Activated CD8-positive, alpha-beta T cell treated with anti-CD3 and anti-CD28 coated beads for 36 hours (primary cell): ENCODE measurements at regions of chr17 and their contacts with region 1.

Region 1: GRCh38 chr17:44218344-44219107 is 949 bp downstream of the UBTF start:
- DNase-seq: peak; percentile 86
- ATAC-seq: peak; percentile 63
- H3K4me3 Mint-ChIP-seq: peak overlapping the region; percentile 96
- H3K27ac Mint-ChIP-seq: peak overlapping the region; percentile 98
- H3K4me1 Mint-ChIP-seq: peaks cover 37% of the 10 kb centered on the region
- H3K27me3 Mint-ChIP-seq: no peaks in the 10 kb centered on the region
- CTCF ChIP-seq: peak; percentile 75

Region 2: GRCh38 chr17:44186307-44187130 is 32.0 kb before region 1 on chr17 and contains the start of gene TMUB2:
- CTCF ChIA-PET with region 1: interaction called, 3 read pairs
- POLR2A ChIA-PET with region 1: interaction called, 13 read pairs
- intact Hi-C with region 1: no loop called
- DNase-seq: peak; percentile 100
- ATAC-seq: peak; percentile 98
- H3K4me3 Mint-ChIP-seq: peak within 1 kb of the TSS; percentile 100
- H3K27ac Mint-ChIP-seq: peak within 1 kb of the TSS; percentile 99
- H3K4me1 Mint-ChIP-seq: peaks cover 33% of the 10 kb centered on the region
- H3K27me3 Mint-ChIP-seq: no peaks in the 10 kb centered on the region
- CTCF ChIP-seq: no peak
- total RNA-seq, gene TMUB2: 17.5 TPM

Region 3: GRCh38 chr17:44199553-44200477 is 18.7 kb before region 1 on chr17 and contains the start of gene ATXN7L3:
- CTCF ChIA-PET with region 1: interaction called, 51 read pairs
- POLR2A ChIA-PET with region 1: interaction called, 58 read pairs
- intact Hi-C with region 1: no loop called
- DNase-seq: peak; percentile 100
- ATAC-seq: peak; percentile 85
- H3K4me3 Mint-ChIP-seq: peak within 1 kb of the TSS; percentile 89
- H3K27ac Mint-ChIP-seq: peak within 1 kb of the TSS; percentile 97
- H3K4me1 Mint-ChIP-seq: peaks cover 38% of the 10 kb centered on the region
- H3K27me3 Mint-ChIP-seq: no peaks in the 10 kb centered on the region
- CTCF ChIP-seq: no peak
- total RNA-seq, gene ATXN7L3: 58.1 to 62.3 TPM

Region 4: GRCh38 chr17:44247440-44247841 is 28.9 kb after region 1 on chr17:
- CTCF ChIA-PET with region 1: interaction called, 5 read pairs
- POLR2A ChIA-PET with region 1: interaction called, 20 read pairs
- intact Hi-C with region 1: no loop called
- DNase-seq: no peak
- ATAC-seq: no peak
- H3K4me3 Mint-ChIP-seq: no peak overlapping the region
- H3K27ac Mint-ChIP-seq: peak overlapping the region; percentile 89
- H3K4me1 Mint-ChIP-seq: peaks cover 48% of the 10 kb centered on the region
- H3K27me3 Mint-ChIP-seq: no peaks in the 10 kb centered on the region
- CTCF ChIP-seq: no peak

Region 5: GRCh38 chr17:44266402-44267164 is 48.1 kb after region 1 on chr17:
- CTCF ChIA-PET with region 1: no interaction called
- POLR2A ChIA-PET with region 1: no interaction called
- intact Hi-C with region 1: no loop called
- DNase-seq: no peak
- ATAC-seq: no peak
- H3K4me3 Mint-ChIP-seq: no peak overlapping the region
- H3K27ac Mint-ChIP-seq: no peak overlapping the region
- H3K4me1 Mint-ChIP-seq: no peaks in the 10 kb centered on the region
- H3K27me3 Mint-ChIP-seq: no peaks in the 10 kb centered on the region
- CTCF ChIP-seq: no peak

Region 6: DNA sequence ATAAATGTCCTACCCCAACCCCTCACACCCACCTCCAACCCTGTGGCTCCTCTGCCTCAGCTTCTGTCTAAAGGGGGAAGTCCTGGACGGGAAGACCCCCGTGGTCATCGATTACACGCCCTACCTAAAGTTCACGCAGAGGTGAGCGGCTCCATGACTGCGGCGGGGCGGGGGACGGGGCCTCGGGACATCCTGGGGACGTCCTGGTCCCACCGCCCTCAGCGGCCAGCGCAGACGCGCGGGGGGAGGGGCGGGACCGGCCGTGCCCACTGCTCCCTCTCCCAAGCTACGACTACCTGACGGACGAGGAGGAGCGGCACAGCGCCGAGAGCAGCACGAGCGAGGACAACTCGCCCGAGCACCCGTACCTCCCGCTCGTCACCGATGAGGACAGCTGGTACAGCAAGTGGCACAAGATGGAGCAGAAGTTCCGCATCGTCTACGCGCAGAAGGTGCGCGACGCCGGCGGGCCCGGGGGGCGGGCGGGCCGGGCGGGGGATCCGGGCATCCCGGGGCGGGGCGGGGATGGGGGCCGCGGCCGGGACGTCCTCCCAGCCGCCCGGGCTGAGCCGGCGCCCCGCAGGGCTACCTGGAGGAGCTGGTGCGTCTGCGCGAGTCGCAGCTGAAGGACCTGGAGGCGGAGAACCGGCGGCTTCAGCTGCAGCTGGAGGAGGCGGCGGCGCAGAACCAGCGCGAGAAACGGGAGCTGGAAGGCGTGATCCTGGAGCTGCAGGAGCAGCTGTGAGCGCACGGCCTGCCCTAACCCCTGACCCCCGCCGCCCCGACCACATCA is 96.5 kb after region 1 on chr17:
- CTCF ChIA-PET with region 1: interaction called, 3 read pairs
- POLR2A ChIA-PET with region 1: interaction called, 19 read pairs
- intact Hi-C with region 1: no loop called
- DNase-seq: peak; percentile 70
- ATAC-seq: peak; percentile 75
- H3K4me3 Mint-ChIP-seq: peak overlapping the region; percentile 70
- H3K27ac Mint-ChIP-seq: no peak overlapping the region
- H3K4me1 Mint-ChIP-seq: peaks cover 12% of the 10 kb centered on the region
- H3K27me3 Mint-ChIP-seq: peaks cover 30% of the 10 kb centered on the region
- CTCF ChIP-seq: no peak

Region 7: DNA sequence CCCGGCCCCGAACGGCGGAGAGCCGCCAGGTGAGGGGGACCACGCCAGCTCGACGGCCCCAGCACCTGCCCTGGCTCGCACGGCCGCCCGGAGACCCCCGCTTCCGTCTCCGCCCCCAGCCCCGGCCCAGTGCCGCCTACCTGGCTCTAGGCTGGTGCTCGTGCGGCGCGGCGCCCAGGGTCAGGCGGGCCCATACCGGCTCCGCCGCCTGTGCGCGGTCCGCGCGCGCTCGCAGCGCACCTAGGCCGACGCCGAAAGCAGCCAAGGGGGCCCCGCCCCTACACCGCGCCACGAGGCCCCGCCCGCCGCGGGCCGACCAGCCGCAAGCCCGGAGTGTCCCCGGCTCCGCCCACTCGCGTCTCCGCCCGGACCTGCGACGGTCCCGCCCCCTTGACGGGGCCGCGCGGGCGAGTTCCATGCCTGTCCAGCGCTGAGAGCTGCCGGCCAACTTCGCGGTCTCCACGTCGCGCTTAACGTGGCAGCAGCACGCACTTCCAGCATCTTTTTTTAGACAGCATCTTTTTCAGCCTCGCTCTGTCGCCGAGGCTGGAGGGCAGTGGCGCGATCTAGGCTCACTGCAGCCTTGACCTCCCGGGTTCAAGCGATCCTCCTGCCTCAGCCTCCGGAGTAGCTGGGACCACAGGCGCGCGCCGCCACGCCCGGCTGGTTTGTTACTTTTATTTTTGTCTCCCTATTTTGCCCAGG is 106.2 kb after region 1 on chr17 and contains the start of gene SLC25A39:
- CTCF ChIA-PET with region 1: interaction called, 6 read pairs
- POLR2A ChIA-PET with region 1: interaction called, 38 read pairs
- intact Hi-C with region 1: loop called (anchors 5 kb)
- DNase-seq: peak; percentile 94
- ATAC-seq: peak; percentile 79
- H3K4me3 Mint-ChIP-seq: peak within 1 kb of the TSS; percentile 87
- H3K27ac Mint-ChIP-seq: peak within 1 kb of the TSS; percentile 95
- H3K4me1 Mint-ChIP-seq: peaks cover 29% of the 10 kb centered on the region
- H3K27me3 Mint-ChIP-seq: no peaks in the 10 kb centered on the region
- CTCF ChIP-seq: no peak
- total RNA-seq, gene SLC25A39: 149 to 153 TPM

Region 8: GRCh38 chr17:44331249-44331760 is 112.8 kb after region 1 on chr17:
- CTCF ChIA-PET with region 1: interaction called, 17 read pairs
- POLR2A ChIA-PET with region 1: interaction called, 38 read pairs
- intact Hi-C with region 1: loop called (anchors 5 kb)
- DNase-seq: peak; percentile 89
- ATAC-seq: peak; percentile 55
- H3K4me3 Mint-ChIP-seq: no peak overlapping the region
- H3K27ac Mint-ChIP-seq: no peak overlapping the region
- H3K4me1 Mint-ChIP-seq: peaks cover 14% of the 10 kb centered on the region
- H3K27me3 Mint-ChIP-seq: no peaks in the 10 kb centered on the region
- CTCF ChIP-seq: peak; percentile 88